Activated CD4-positive, alpha-beta T cell treated with anti-CD3 and anti-CD28 coated beads for 36 hours (primary cell): ENCODE measurements at regions of chr11 and their contacts with region 1.

Region 1: GRCh38 chr11:78416305-78417178 is 1.1 kb downstream of the GAB2 start:
- DNase-seq: peak; percentile 88
- ATAC-seq: peak; percentile 73
- H3K4me3 Mint-ChIP-seq: peak overlapping the region; percentile 81
- H3K27ac Mint-ChIP-seq: peak overlapping the region; percentile 59
- H3K4me1 Mint-ChIP-seq: peaks cover 32% of the 10 kb centered on the region
- H3K27me3 Mint-ChIP-seq: peaks cover 29% of the 10 kb centered on the region

Region 2: DNA sequence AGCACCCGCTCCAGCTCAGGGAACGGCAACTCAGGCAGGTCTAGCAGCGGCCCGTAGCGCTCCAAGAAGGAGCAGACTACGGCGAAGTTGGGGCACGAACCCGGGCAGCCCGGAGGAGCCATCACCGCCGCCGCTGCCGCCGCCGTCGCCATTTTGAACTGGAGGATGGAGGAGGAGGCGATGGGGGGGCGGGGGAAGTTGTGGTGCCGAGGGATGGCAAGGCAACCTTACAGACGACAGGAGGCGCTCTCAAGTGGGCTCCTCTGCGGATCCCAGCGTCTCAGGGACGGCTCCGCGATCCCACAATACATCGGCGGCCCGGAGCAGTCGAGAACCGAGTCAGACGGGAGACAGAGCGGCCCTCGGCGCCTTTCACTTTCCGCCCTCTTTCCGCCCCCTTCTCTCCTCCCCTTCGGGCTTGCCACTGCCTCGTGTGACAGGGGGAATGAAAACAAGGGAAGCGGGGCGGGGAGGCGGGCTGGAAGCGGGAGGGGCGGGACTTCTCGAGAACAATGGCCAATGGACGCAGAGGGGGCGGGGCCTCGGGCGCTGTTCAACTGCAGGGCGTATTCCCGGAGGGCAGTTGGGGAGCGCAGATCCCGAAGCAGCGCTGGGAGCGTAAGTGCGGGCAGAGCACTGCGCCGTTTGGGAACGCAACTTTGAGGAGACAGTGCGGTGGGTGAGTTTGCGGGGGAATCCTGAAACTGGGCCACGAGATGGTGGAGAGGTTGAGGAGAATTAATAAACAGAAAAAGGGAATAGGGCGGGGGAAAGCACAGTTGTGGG is 595.8 kb before region 1 on chr11 and contains the starts of genes AAMDC and RSF1:
- CTCF ChIA-PET with region 1: no interaction called
- POLR2A ChIA-PET with region 1: no interaction called
- intact Hi-C with region 1: loop called in 1 of 2 experiments (anchors 2 kb)
- DNase-seq: peak; percentile 99
- ATAC-seq: peak; percentile 88
- H3K4me3 Mint-ChIP-seq: peak within 1 kb of the TSS; percentile 97
- H3K27ac Mint-ChIP-seq: peak within 1 kb of the TSS; percentile 98
- H3K4me1 Mint-ChIP-seq: peaks cover 35% of the 10 kb centered on the region
- H3K27me3 Mint-ChIP-seq: no peaks in the 10 kb centered on the region
- total RNA-seq, gene AAMDC: 4.8 to 5.3 TPM
- total RNA-seq, gene RSF1: 49.9 to 59.2 TPM

Region 3: GRCh38 chr11:78079232-78080083 is 337.1 kb before region 1 on chr11 and contains the start of gene NDUFC2:
- CTCF ChIA-PET with region 1: interaction called, 5 read pairs
- POLR2A ChIA-PET with region 1: no interaction called
- intact Hi-C with region 1: loop called in 1 of 2 experiments (anchors 2 kb)
- DNase-seq: peak; percentile 81
- ATAC-seq: peak; percentile 83
- H3K4me3 Mint-ChIP-seq: peak within 1 kb of the TSS; percentile 91
- H3K27ac Mint-ChIP-seq: peak within 1 kb of the TSS; percentile 90
- H3K4me1 Mint-ChIP-seq: peaks cover 49% of the 10 kb centered on the region
- H3K27me3 Mint-ChIP-seq: no peaks in the 10 kb centered on the region
- total RNA-seq, gene NDUFC2: 214 to 236 TPM

Region 4: DNA sequence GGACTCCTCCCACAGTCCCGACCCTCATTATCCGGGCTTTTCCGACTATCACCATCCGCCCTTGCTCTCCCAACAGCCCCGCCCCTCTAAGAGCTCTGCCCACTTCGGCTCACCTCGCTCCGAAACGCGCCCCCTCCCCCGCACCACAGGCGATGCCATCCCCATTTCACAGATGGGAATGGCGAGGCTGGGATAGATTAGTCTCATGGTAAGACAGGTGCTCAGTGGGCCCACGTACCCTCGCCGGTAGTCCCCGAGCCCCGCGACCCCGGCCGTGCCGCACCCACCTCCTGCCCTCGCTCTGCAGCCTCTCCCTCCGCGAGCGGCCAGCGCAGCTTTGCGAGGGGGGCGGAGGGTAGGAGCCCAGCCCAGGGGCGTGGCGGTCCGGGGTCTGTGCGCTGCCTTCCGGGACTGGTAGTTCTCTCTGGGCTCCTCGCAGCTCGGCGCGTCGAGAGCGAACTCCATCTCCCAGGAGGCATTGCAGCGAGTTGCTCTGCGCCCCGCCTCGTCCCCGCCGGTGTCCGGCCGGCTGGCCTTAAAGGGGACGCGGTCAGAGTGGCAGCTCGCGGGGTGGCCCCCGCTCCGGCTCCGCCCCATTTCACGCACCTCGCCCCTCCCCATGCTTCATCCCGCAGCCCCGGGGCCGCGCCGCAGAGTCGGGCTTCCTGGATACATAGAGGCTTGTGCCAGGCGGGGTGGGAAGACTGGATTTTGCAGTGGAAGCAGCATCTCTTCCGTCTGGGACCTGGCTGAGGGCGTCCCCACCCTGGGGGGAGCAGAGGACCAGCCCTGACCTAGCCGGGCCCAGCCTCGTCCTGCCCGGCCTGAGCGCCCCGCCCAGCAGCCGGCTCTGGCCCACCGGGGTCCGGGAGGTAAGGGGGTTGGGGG is 228.0 kb before region 1 on chr11 and contains the starts of genes KCTD21 and USP35:
- CTCF ChIA-PET with region 1: interaction called, 6 read pairs
- POLR2A ChIA-PET with region 1: no interaction called
- intact Hi-C with region 1: loop called in 1 of 2 experiments (anchors 1 kb)
- DNase-seq: peak; percentile 96
- ATAC-seq: peak; percentile 85
- H3K4me3 Mint-ChIP-seq: peak within 1 kb of the TSS; percentile 84
- H3K27ac Mint-ChIP-seq: peak within 1 kb of the TSS; percentile 97
- H3K4me1 Mint-ChIP-seq: peaks cover 57% of the 10 kb centered on the region
- H3K27me3 Mint-ChIP-seq: no peaks in the 10 kb centered on the region
- total RNA-seq, gene KCTD21: 9.0 to 9.8 TPM
- total RNA-seq, gene USP35: 9.2 to 9.8 TPM

Region 5: DNA sequence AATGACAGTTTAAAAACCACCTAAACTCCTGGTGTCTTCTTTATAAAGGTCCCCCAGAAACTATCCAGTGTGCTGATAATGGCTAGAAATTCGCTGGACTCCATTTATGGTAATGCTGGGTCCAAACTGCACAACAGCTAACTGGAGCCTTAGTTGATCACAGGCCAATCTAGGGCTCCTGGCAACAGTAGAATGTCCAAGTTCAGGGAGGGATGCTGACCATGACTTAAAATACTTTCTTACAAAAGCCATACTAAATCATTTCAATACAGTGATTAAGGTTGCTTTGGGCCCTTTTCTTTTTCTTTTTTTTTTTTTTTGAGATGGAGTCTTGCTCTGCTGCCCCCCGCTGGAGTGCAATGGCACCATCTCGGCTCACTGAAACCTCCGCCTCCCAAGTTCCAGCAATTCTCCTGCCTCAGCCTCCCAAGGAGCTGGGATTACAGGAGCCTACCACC is 15.5 kb after region 1 on chr11:
- CTCF ChIA-PET with region 1: interaction called, 14 read pairs
- POLR2A ChIA-PET with region 1: no interaction called
- intact Hi-C with region 1: no loop called
- DNase-seq: peak; percentile 23
- ATAC-seq: no peak
- H3K4me3 Mint-ChIP-seq: no peak overlapping the region
- H3K27ac Mint-ChIP-seq: no peak overlapping the region
- H3K4me1 Mint-ChIP-seq: peaks cover 16% of the 10 kb centered on the region
- H3K27me3 Mint-ChIP-seq: no peaks in the 10 kb centered on the region

Region 6: DNA sequence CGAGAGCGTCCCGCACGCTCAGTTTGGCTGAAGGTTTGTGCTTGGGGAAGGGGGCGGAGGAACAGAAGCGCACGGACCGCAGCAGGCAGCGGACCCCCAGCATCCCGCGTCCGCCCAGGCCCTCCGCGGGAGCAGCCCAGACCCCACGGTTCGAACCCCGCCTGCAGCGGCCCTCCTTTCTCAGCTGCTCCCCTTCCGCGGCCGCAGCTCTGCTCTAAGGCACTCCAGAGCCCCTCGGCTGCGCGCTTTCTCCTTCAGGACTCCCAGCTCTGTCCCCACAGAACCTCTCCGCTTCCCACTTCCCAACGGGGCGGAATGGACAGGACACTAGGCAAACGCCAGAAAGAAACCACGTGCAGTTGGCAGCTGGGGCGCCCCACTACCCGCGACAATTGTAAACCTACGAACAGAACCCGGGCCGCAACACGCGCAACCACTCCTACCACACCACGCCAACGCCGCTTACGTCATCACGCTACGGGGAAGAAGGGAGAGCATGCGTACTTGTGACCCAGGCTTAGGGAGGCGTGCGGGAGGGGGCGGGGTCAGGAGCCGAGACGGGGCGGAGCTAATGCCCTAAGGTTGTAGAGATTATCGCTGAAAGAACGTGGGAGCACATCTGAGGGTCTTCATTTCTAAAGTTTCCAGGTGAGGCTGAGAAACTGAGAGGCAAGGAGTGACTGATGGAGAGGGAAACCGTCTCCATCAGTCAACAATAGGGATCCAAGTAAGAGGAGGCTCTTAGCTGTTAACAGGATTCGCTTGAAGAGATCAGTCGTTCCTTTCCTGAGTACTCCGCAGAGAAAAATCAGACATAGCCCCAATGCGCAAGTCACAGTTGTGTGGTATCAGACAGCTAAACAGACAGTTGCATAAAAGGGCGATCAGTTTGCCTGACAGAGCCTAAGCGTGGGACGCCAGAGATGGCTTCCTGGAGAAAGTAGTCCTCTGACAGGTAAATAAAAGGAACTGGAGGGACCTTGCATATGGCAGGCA is 158.1 kb after region 1 on chr11 and contains the start of gene NARS2:
- CTCF ChIA-PET with region 1: interaction called, 24 read pairs
- POLR2A ChIA-PET with region 1: no interaction called
- intact Hi-C with region 1: loop called in 1 of 2 experiments (anchors 1 kb)
- DNase-seq: peak; percentile 100
- ATAC-seq: peak; percentile 99
- H3K4me3 Mint-ChIP-seq: peak within 1 kb of the TSS; percentile 97
- H3K27ac Mint-ChIP-seq: peak within 1 kb of the TSS; percentile 89
- H3K4me1 Mint-ChIP-seq: peaks cover 28% of the 10 kb centered on the region
- H3K27me3 Mint-ChIP-seq: no peaks in the 10 kb centered on the region
- total RNA-seq, gene NARS2: 22.9 to 33.4 TPM